PC-9 (cell line): ENCODE measurements at regions of chr12 and their contacts with region 1.

Region 1: DNA sequence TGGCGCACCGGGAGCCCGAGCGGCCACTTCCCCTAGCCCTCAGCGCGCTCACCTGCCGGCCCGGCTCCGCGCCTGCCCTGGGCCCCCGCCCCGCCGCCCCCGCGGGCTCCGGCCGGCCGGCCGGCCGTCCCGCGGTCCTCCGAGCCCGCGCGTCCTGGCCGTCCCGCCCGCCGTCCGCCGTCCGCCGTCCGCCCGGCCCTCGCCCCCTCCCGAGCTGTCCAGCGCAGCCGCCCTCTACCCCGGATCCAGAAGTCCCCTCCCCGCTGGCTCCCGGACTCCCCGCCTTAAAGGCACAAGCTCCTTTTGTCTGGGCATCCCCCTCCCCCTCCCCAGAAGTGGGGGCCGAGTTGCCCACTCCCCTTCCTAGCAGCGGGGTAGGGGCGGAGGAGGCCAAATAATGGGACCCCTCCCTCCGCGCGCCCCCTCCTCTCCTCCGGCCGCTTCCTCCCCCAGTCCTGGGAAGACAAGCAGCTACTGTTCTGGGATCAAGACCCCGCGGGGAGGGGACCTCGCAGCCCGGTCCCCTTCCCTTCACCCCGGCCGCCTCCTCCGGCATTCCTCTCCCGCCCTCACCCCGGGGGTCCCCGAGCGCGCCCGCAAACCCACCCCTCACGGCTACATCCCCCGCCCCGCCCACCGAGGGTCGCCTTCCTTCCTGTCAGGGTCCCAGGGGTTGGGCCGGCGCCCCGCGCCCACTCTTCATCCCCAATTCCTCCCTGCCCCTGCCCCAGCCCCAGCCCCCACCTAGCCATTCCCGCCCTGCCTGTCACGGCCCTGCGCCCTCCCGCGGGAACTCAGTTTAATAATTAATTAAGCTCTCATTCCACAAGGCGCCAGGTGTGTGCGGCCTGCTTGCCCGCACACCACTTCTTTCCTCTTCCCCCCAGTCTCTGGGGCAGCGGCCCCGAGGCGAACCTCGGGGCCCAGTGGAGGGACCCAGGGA is at the start of gene ADCY6:
- DNase-seq: peak; percentile 61 to 77
- H3K4me3 ChIP-seq: peak within 1 kb of the TSS; percentile 89
- H3K27ac ChIP-seq: 0 out of 2 replicates have a peak within 1 kb of the TSS, but pooled peaks have one; percentile 43
- H3K4me1 ChIP-seq: peaks cover 33% of the 10 kb centered on the region
- H3K27me3 ChIP-seq: no peaks in the 10 kb centered on the region
- CTCF ChIP-seq: no peak
- total RNA-seq, gene ADCY6: 48.3 and 61.9 TPM in 2 replicates

Region 2: GRCh38 chr12:48175613-48176416 is 613.3 kb before region 1 on chr12:
- CTCF ChIA-PET with region 1: no interaction called
- POLR2A ChIA-PET with region 1: interaction called, 12 read pairs
- intact Hi-C with region 1: no loop called
- DNase-seq: no peak
- H3K4me3 ChIP-seq: no peak overlapping the region
- H3K27ac ChIP-seq: no peak overlapping the region
- H3K4me1 ChIP-seq: peaks cover 8% of the 10 kb centered on the region
- H3K27me3 ChIP-seq: peaks cover 16% of the 10 kb centered on the region
- CTCF ChIP-seq: no peak

Region 3: DNA sequence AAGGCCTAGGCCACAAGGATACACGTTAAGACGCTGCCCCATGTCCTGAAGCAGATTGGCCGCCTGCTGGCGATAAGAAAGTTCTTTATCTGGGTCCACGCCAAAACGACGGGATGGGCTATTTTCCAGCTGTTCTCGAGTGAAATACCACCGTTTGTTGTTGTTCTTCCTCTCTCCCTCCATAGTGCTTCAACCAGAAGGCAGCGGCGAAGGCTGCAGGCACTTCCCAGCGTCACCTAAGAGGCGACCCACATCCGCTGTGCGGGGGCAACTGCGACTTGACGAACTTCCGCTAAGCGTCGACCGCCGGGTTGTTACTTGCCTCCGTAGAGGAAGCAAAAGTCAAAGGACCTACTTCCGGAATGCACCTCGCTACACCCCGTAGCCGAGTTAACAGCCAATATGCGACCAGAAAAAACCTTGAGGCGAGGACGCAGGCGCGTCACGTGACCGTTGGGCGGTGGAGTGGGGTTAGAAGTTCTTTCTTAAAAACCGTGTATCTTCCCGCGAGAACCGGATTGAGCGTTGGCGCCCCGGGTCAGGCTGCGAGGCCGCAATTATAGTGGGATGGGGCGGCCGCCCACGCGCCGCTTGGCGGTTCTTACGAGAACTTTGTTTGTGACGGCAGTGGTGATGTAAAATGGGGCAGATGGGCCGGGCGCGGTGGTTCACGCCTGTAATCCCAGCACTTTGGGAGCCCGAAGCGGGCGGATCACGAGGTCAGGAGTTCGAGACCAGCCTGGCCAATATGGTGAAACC is 72.5 kb before region 1 on chr12 and contains the start of gene CCNT1:
- CTCF ChIA-PET with region 1: no interaction called
- POLR2A ChIA-PET with region 1: no interaction called
- intact Hi-C with region 1: loop called (anchors 2 kb)
- DNase-seq: peak; percentile 98 to 99
- H3K4me3 ChIP-seq: peak within 1 kb of the TSS; percentile 96
- H3K27ac ChIP-seq: peak within 1 kb of the TSS; percentile 85
- H3K4me1 ChIP-seq: peaks cover 15% of the 10 kb centered on the region
- H3K27me3 ChIP-seq: no peaks in the 10 kb centered on the region
- CTCF ChIP-seq: peak; percentile 10; the same call in 1 of the 2 replicates
- total RNA-seq, gene CCNT1: 20.3 and 50.8 TPM in 2 replicates

Region 4: GRCh38 chr12:49069507-49070346 is 280.6 kb after region 1 on chr12 and contains the start of gene RHEBL1:
- CTCF ChIA-PET with region 1: no interaction called
- POLR2A ChIA-PET with region 1: no interaction called
- intact Hi-C with region 1: no loop called
- DNase-seq: peak; percentile 88 to 98
- H3K4me3 ChIP-seq: peak within 1 kb of the TSS; percentile 95
- H3K27ac ChIP-seq: peak within 1 kb of the TSS; percentile 39; the same call in 1 of the 2 replicates
- H3K4me1 ChIP-seq: peaks cover 8% of the 10 kb centered on the region; the same call in 1 of the 2 replicates
- H3K27me3 ChIP-seq: no peaks in the 10 kb centered on the region
- CTCF ChIP-seq: no peak; the same call in 1 of the 2 replicates
- total RNA-seq, gene RHEBL1: 2.9 and 3.4 TPM in 2 replicates